Natural killer cell (primary cell): ENCODE measurements at regions of chr1 and their contacts with region 1.

Region 1: GRCh38 chr1:7752512-7753417 is 18.3 kb upstream of the VAMP3 start:
- DNase-seq: peak in 1 of 2 donors; percentile 78
- ATAC-seq: peak in 2 of 3 donors; percentile 54 to 66
- H3K4me3 ChIP-seq: no peak overlapping the region
- H3K4me3 Mint-ChIP-seq: peak overlapping the region; percentile 51
- H3K27ac ChIP-seq: no peak overlapping the region
- H3K27ac Mint-ChIP-seq: no peak overlapping the region
- H3K4me1 ChIP-seq: peaks cover 4% of the 10 kb centered on the region
- H3K4me1 Mint-ChIP-seq: peaks cover 9 to 14% of the 10 kb centered on the region in 2 donors
- H3K27me3 ChIP-seq: no peaks in the 10 kb centered on the region
- H3K27me3 Mint-ChIP-seq: no peaks in the 10 kb centered on the region
- CTCF ChIP-seq: peak; percentile 79

Region 2: DNA sequence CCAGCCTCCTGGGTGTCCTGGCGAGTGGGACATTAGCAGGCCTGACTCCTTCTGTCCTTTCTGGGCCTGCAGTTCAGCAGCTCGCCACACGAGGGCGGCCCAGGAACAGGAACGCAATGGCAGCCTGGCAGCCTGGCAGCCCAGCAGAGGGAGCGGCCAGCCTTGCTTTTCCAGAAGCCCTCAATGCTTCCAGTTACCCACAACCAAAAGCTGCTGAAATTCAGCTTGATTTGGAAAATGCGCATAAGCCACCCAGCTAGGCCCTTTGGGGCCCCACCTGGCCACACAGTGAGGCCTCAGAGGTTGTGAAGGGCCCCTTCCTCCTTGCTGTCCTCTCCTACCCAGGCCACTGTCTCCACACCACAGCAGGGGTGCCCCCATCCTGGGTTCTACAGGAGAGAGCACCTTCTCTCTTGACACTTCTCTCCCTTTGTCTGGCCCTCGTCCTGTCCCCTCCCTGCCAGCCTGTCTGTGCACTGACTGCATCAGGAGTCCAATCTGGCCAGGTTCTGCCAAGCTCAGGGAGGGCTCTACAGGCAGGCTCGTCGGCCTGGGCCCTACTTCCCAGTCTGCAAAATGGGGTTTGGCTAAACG is 85.0 kb before region 1 on chr1:
- intact Hi-C with region 1: loop called (anchors 1 kb)
- DNase-seq: peak; percentile 86 to 88
- ATAC-seq: peak; percentile 83 to 94 (median 88)
- H3K4me3 ChIP-seq: no peak overlapping the region
- H3K4me3 Mint-ChIP-seq: no peak overlapping the region
- H3K27ac ChIP-seq: no peak overlapping the region
- H3K27ac Mint-ChIP-seq: no peak overlapping the region
- H3K4me1 ChIP-seq: peaks cover 16% of the 10 kb centered on the region
- H3K4me1 Mint-ChIP-seq: peaks cover 0 to 11% of the 10 kb centered on the region in 2 donors
- H3K27me3 ChIP-seq: no peaks in the 10 kb centered on the region
- H3K27me3 Mint-ChIP-seq: peaks cover 0 to 5% of the 10 kb centered on the region in 2 donors
- CTCF ChIP-seq: peak; percentile 94

Region 3: DNA sequence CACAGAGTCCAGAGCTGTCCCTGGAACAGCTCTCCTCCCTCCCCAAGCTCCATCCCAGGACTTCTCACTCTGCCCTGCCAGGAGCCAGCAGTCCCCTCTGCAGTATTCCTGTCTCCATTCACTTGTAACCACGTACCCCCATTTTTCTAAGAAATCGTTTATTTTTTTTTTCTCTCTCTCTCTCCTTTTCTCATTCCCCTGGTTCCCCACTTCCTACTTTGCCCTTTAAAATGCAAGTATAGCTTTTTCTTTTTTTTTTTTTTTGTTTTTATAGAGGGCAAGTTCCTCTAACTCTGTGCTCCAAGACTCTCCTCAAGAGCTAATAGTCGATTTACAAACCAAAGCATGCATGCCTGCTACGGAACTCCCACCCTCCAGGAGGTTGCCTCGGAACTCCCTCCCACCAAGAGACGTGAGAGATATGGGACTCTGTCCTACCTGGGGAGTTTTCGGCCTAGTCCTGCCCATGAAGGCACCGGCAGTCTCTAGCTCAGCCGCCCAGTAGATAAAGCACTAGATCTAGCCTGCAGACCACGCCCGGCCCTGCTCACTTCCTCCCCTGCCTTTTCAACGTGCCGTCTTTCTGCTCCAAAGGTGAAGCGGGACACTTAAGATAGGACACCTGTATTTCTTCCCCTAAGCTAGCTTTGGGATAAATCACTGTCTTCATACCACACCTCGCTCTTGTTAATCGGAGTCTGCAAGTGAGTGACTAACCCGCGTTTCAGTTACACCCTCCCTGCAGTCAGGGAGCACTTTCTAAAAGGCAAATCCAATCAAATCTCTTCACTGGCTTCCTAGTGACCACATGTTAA is 160.2 kb after region 1 on chr1:
- intact Hi-C with region 1: no loop called
- DNase-seq: peak in 1 of 2 donors; percentile 20
- ATAC-seq: peak; percentile 23 to 49 (median 27)
- H3K4me3 ChIP-seq: no peak overlapping the region
- H3K4me3 Mint-ChIP-seq: peak overlapping the region; percentile 84
- H3K27ac ChIP-seq: no peak overlapping the region
- H3K27ac Mint-ChIP-seq: peak overlapping the region; percentile 72 to 86
- H3K4me1 ChIP-seq: peaks cover 51% of the 10 kb centered on the region
- H3K4me1 Mint-ChIP-seq: peaks cover 39 to 46% of the 10 kb centered on the region in 2 donors
- H3K27me3 ChIP-seq: no peaks in the 10 kb centered on the region
- H3K27me3 Mint-ChIP-seq: no peaks in the 10 kb centered on the region
- CTCF ChIP-seq: no peak